Sigmoid colon (tissue), 7 donors: ENCODE measurements at regions of chr10 and their contacts with region 1.

Region 1: DNA sequence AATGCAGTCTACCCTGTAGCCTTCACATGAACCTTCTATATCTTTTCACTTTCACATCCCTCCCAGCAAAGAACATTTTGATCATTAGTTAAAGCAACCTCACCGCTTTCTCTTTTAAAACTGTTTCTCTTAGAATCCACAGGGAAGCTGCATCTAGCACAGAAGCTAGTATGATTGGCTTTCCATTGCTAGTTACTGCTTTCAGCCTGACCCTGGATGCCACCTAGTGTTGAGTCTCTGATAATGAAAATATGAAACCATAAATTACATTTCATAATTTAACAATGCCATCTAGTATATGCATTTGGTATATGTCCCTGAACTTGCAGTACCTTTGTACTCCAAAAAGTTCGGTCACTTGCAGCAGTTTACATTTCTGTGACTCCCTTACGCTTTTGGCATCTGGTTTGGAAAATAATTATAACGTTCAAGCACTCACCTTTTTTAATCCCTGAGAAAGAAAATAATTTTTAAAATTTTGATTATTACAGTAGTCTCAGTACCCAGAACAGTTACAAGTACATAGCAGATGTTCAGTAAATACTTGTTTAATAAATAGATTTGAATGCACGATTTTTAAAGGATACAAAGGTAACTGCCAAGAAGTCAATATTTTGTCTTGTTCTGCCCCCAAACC is 22.7 kb downstream of the CISD1 start:
- DNase-seq: no peak
- H3K4me3 ChIP-seq: no peak overlapping the region
- H3K27ac ChIP-seq: no peak overlapping the region
- H3K4me1 ChIP-seq: no peaks in the 10 kb centered on the region
- H3K27me3 ChIP-seq: no peaks in the 10 kb centered on the region
- CTCF ChIP-seq: peak in 3 of 4 experiments; percentile 68 to 71 (median 69)
- EP300 ChIP-seq: no peak
- POLR2A ChIP-seq: no peak

Region 2: DNA sequence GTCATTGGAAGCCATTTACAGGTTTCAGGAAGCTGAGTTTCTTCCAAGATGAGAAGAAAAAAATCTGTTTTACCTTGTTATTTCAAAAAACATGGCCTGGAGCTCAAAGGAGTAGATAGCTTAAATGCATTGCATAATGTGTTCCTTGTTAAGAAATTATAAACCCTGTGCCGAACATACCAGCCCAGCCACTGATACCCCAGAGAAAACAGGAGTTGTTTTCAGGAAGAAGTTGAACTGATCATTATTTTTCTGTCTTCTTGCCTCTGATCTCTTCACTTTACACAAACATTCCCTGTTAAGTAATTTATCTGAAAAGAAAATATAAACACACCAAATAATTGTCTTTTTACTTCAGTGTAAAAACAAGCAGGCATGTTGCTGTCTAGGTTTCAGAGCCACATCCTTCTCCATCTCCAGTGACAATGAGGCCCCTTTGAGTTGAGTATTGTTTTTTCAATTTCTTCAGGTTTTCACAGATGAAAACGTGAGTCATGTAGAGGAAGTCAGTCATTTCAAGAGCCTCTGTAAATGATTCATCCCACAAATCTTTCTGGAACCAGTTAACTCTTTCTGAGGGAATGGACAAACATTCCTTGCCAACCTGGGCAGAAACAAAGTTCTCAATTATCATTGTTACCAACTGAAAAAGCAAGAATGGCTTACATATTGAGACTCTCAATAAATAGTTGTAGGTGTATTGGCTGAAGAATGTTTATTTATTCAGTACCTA is 268.1 kb before region 1 on chr10:
- intact Hi-C with region 1: no loop called
- DNase-seq: no peak
- H3K4me3 ChIP-seq: no peak overlapping the region
- H3K27ac ChIP-seq: no peak overlapping the region
- H3K4me1 ChIP-seq: no peaks in the 10 kb centered on the region
- H3K27me3 ChIP-seq: no peaks in the 10 kb centered on the region
- CTCF ChIP-seq: no peak
- EP300 ChIP-seq: no peak
- POLR2A ChIP-seq: no peak

Region 3: DNA sequence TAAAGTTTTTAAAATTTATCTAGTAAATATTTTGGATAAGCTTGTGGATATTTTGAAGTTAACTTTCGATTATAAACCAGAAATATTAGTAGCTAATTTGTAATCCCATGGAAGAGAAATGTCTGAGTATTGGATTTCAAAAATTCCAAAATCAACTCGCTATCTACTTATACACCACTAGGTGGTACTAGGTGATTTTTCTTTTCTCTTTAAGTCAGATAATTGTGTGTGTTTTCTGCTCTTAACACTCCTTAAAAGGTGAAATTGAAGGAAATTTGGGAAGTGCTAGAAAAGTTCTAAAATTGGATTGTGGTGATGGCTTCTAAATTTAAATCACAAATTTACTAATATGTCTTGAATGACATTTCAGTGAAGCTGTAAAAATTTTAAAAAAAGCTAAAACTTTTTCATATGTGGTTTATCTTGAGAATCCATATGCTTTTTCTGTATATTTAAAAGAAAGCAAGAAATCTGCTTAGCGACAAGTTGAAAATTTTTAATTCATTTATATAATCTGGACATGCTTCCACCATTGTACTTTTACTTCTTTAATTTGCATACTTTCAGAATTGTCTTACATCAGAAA is 114.2 kb before region 1 on chr10:
- intact Hi-C with region 1: loop called (anchors 1 kb)
- DNase-seq: no peak
- H3K4me3 ChIP-seq: no peak overlapping the region
- H3K27ac ChIP-seq: no peak overlapping the region
- H3K4me1 ChIP-seq: peaks cover 0 to 8% (median 0%) of the 10 kb centered on the region in 4 donors
- H3K27me3 ChIP-seq: no peaks in the 10 kb centered on the region
- CTCF ChIP-seq: peak in 3 of 4 experiments; percentile 8 to 54 (median 30)
- EP300 ChIP-seq: no peak
- POLR2A ChIP-seq: no peak

Region 4: GRCh38 chr10:58360391-58361004 is 68.8 kb after region 1 on chr10:
- intact Hi-C with region 1: no loop called
- DNase-seq: no peak
- H3K4me3 ChIP-seq: no peak overlapping the region
- H3K27ac ChIP-seq: no peak overlapping the region
- H3K4me1 ChIP-seq: peaks cover 0 to 18% (median 6%) of the 10 kb centered on the region in 4 donors
- H3K27me3 ChIP-seq: no peaks in the 10 kb centered on the region
- CTCF ChIP-seq: no peak
- EP300 ChIP-seq: no peak
- POLR2A ChIP-seq: no peak